HEK293 (cell line): ENCODE measurements at regions of chr6 and their contacts with region 1.

Region 1: GRCh38 chr6:99349171-99350141 is at the start of gene FAXC:
- H3K4me3 ChIP-seq: peak within 1 kb of the TSS; percentile 62
- H3K27ac ChIP-seq: peak within 1 kb of the TSS; percentile 83; the same call in 1 of the 2 replicates
- H3K4me1 ChIP-seq: peaks cover 5% of the 10 kb centered on the region; the same call in 1 of the 2 replicates
- CTCF ChIP-seq: peak; percentile 68

Region 2: DNA sequence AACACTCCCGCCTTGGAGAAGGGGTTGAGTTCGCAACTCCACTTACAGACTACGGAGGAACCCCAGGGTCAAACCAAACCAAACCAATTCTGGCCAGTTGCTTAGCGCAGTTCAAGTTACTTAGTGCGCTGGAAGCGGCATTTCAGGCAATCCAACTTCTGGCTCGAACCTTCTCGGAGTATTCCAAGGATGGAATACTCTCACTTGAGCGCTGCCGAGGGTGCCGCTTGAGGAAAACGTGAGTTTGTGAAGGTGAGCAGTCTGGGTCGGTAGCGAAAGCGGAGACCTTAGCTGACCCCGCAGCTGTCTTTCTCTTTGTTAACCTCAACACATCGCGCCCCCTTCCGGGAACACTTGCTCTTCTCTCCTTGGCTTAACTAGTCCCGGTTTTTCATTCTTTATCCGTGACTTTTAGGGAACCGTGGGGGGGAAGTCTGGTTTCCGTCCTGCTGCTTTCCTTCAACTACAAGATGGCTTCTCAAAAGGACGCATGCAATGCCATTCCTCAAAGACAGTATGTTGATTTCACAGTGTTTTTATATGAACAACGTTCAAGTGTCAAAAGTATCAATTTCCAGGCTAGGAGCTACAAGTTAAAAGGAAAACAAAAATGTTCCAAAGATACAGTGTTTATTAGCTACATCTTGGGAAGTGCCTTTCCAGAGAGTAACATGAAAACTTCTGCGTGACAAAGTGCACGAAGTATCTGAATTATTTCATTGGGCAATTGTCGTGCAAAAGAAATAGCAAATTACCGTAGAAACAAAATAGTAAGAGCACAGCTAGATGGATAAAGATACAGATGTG is 76.4 kb after region 1 on chr6:
- CTCF ChIA-PET with region 1: interaction called, 4 read pairs
- POLR2A ChIA-PET with region 1: interaction called, 12 read pairs
- H3K4me3 ChIP-seq: peak overlapping the region; percentile 57
- H3K27ac ChIP-seq: peak overlapping the region; percentile 88
- H3K4me1 ChIP-seq: peaks cover 4% of the 10 kb centered on the region; the same call in 1 of the 2 replicates
- CTCF ChIP-seq: peak; percentile 72

Region 3: GRCh38 chr6:99641270-99641669 is 291.8 kb after region 1 on chr6:
- CTCF ChIA-PET with region 1: no interaction called
- POLR2A ChIA-PET with region 1: no interaction called
- H3K4me3 ChIP-seq: no peak overlapping the region
- H3K27ac ChIP-seq: no peak overlapping the region
- H3K4me1 ChIP-seq: no peaks in the 10 kb centered on the region
- CTCF ChIP-seq: no peak